Activated T-helper 1 cell treated with anti-CD3 and anti-CD28 coated beads, Interleukin-12 subunit alpha, Interleukin-12 subunit beta, Interleukin-2, Interleukin-4 antibody, amounts not matched to agents 30 ng/mL and 10 ng/mL and 1 ng/mL, durations not matched to agents 14 hours and 24 hours and 36 hours (primary cell): ENCODE measurements at regions of chr10 and their contacts with region 1.

Region 1: GRCh38 chr10:5446390-5446926 is 34.1 kb downstream of the NET1 start:
- DNase-seq: peak; percentile 75
- H3K4me3 Mint-ChIP-seq: peak overlapping the region; percentile 89
- H3K27ac Mint-ChIP-seq: peak overlapping the region; percentile 79
- H3K4me1 Mint-ChIP-seq: peaks cover 62% of the 10 kb centered on the region
- H3K27me3 Mint-ChIP-seq: no peaks in the 10 kb centered on the region

Region 2: DNA sequence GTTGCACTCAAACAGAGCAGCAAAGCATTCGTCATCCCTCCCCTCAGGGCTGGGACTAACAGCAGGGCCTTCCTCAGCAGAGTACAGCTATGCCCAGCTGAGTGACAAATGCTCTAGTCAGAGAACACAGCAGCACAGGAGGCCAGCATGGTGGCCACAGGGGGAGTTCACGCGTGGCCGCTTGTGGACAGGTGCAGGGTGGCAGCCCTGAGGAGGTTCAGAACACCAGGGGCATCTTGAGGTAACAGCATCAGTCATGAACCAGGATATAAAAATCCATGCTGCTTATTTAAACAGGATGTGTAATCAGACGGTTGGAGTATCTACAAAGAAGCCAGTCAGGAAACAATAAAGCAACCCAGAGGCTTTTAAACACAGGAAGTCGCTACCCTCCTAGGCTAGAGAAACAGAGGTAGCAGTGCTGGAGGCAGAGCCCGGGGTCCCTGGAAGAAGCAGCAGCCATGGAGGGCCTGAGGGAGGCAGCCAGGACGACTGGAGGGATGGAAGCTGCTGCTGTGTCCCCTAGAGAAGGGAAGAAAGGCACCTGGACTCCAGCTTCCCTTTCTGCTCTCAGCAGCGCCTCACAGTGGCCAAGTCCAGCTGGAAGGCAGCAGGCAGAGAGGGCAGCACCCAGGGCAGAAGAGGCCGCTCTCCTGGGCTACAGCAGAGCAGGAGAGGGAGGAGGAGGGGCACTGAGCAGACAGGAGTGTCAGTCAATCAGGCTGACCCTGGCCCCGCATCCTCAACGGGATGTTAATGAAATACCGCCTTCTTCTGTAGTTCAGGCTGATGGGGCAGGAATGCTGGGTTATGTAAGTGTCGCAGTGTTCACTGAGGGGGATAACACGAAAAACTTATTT is 152.5 kb before region 1 on chr10:
- intact Hi-C with region 1: loop called (anchors 2 kb)
- DNase-seq: peak; percentile 73
- H3K4me3 Mint-ChIP-seq: peak overlapping the region; percentile 93
- H3K27ac Mint-ChIP-seq: peak overlapping the region; percentile 100
- H3K4me1 Mint-ChIP-seq: peaks cover 82% of the 10 kb centered on the region
- H3K27me3 Mint-ChIP-seq: no peaks in the 10 kb centered on the region

Region 3: DNA sequence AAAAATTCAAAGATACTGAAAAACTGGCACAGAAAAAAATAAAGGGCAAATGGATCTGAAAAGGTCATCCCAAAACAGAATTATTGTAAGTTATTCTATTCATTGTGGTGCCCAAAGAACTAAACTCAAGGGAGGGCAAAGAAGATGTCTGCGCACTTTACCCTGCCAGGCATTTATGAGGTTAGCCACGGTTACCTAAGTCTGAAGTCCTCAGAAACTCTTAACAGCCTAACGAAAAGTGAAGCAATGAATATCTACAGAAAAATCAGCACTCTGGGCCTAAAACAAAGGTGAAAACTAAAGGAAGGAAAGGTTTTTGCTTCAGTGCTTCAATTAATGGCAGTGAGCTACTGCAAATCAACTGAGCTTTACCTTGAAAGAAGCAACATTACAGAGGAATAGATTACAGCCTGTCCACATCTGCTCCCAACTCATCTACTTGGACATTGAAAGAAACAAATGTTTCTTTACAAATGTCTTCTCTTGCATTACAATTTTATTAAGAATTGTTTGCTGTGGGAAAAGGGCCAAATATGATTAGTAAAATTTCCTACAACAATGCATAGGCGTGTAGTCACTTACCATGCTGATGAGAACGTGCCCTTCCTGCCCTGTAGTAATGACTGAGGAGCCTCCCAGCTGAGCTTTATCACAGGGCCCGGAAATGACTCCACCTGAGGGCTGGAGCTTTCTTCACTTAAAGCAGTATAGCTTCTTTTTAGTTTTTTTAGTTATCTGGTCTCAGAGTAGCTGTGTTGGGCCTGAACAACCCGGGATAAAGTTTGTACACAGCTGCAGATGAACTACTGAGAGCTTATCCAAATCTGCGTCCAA is 42.0 kb before region 1 on chr10 and contains the start of gene TUBAL3:
- intact Hi-C with region 1: no loop called
- DNase-seq: no peak
- H3K4me3 Mint-ChIP-seq: no peak within 1 kb of the TSS
- H3K27ac Mint-ChIP-seq: no peak within 1 kb of the TSS
- H3K4me1 Mint-ChIP-seq: no peaks in the 10 kb centered on the region
- H3K27me3 Mint-ChIP-seq: peaks cover 15% of the 10 kb centered on the region
- total RNA-seq, gene TUBAL3: not detected in 2 replicates

Region 4: DNA sequence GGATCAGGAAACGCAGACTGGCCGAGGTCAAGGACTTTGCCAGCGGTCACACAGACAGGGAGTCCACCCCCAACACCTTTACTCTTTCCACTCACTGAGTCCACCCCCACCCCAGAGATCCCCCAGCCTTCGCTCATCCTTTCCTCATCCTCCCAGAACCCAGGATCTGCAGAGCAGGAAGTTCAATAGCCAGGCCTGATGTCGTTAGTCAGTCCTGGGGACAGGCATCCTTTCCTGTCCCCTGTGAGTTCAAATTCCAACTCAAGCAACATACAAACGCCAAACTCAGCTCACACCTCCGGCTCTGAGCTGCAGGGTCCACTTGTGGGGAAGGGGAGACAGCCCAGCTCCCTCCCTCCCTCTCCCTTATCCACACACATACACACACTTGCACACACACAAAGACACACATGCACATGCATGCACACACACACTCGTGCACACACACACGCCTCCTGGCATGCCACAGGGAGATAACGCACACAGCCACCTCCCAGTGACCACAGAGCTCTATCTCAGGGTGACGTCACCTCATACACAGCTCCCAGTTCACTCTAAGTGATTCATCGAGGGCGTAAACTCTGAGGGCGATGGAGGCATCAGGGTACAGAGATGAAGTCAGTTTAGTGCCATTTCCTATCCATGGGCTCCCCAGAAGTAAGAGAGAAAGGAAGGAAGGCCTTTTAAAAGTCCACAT is 102.2 kb after region 1 on chr10:
- intact Hi-C with region 1: loop called (anchors 1 kb)
- DNase-seq: peak; percentile 51
- H3K4me3 Mint-ChIP-seq: no peak overlapping the region
- H3K27ac Mint-ChIP-seq: no peak overlapping the region
- H3K4me1 Mint-ChIP-seq: peaks cover 28% of the 10 kb centered on the region
- H3K27me3 Mint-ChIP-seq: peaks cover 4% of the 10 kb centered on the region

Region 5: GRCh38 chr10:5873515-5873995 is 427.1 kb after region 1 on chr10:
- intact Hi-C with region 1: loop called (anchors 1 kb)
- DNase-seq: peak; percentile 59
- H3K4me3 Mint-ChIP-seq: peak overlapping the region; percentile 43
- H3K27ac Mint-ChIP-seq: no peak overlapping the region
- H3K4me1 Mint-ChIP-seq: peaks cover 6% of the 10 kb centered on the region
- H3K27me3 Mint-ChIP-seq: no peaks in the 10 kb centered on the region

Region 6: DNA sequence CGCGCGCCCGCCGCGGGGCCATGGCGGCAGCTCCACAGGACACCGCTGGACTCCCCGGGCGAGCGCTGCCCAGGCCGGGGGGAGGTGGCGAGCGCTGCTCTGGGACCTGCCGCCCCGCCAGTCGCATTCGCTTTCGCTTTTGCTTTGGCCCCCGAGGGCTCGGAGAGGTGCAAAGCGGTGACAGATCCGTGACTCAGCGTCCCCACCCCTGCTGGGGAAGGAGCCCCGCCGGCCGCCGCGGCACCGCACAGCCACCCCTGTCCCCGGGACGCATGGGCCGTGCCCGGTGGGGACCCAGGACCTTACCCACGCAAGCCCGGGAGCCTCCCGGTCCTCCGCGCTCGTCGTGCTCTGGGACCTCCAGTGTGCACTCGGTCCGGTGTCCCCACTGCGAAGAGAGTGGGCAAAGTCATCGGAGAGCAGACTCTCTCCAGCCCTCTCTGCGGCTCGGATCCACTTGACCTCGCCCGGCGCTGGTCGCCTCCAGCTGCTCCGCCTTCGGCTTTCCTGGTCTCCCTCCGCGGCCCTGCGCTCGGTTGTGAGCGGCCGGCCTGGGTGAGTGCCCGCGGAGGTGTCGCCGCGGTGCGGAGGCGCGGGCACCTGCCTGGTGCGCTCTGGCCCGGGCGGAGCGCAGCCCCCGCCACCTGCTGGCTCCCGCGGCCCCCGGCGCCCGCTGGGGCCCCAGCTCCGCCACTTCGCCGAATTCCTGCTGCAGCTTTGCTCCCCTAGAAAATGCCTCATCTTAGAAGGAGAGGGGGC is 531.2 kb after region 1 on chr10 and contains the start of gene IL15RA:
- intact Hi-C with region 1: loop called (anchors 10 kb)
- DNase-seq: peak; percentile 88
- H3K4me3 Mint-ChIP-seq: peak within 1 kb of the TSS; percentile 93
- H3K27ac Mint-ChIP-seq: peak within 1 kb of the TSS; percentile 90
- H3K4me1 Mint-ChIP-seq: peaks cover 31% of the 10 kb centered on the region
- H3K27me3 Mint-ChIP-seq: peaks cover 3% of the 10 kb centered on the region
- total RNA-seq, gene IL15RA: 23.4 and 24.4 TPM in 2 replicates